Posterior vena cava (tissue), 2 donors: ENCODE measurements at regions of chr12 and their contacts with region 1.

Region 1: GRCh38 chr12:53344824-53345485 is 8.8 kb upstream of the SP7 start:
- DNase-seq: peak; percentile 90

Region 2: DNA sequence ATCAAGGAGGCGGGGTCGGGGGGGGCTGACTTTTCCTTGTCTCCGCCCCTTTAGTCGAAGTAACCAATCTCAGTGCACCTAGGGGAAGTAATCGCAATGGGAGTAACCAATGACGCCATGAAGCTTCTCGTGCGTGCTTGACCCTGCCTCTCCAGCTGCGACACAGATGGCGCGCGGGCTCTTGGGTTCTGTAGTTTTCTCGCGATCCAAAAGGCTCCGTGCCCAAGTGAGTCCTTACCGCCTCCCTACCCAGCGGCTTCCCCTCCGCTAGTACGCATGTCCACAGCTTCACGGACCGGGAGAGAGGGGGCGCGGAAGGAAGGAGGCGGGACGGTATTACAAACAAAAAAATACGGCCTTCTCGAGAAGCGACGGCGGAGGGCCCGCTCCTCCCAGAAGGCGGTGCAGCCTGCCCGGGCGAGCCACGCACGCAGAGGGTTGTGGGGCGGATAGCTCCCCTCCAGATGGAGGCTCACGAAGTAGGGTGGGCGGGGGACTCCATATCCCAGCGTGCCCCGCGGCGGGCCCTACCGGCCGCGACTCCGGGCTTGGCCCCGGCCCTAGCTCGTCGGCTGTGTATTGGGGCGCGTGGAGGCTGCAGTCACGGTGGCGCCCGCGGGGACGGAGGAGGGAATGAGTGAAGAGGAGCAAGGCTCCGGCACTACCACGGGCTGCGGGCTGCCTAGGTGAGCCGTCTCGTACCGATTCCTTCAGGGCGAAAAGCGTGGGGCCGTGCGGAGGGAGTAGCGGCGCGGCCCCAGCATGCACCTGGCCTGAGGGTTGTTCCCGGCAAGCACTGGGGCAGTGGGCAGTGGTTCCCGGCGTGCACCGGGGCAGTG is 156.0 kb after region 1 on chr12 and contains the start of gene TARBP2:
- intact Hi-C with region 1: loop called (anchors 10 kb)
- DNase-seq: peak; percentile 99
- total RNA-seq, gene TARBP2: 12.8 to 16.8 TPM